ENCODE measurements at regions of chr4 and their contacts with region 1.

Region 1: DNA sequence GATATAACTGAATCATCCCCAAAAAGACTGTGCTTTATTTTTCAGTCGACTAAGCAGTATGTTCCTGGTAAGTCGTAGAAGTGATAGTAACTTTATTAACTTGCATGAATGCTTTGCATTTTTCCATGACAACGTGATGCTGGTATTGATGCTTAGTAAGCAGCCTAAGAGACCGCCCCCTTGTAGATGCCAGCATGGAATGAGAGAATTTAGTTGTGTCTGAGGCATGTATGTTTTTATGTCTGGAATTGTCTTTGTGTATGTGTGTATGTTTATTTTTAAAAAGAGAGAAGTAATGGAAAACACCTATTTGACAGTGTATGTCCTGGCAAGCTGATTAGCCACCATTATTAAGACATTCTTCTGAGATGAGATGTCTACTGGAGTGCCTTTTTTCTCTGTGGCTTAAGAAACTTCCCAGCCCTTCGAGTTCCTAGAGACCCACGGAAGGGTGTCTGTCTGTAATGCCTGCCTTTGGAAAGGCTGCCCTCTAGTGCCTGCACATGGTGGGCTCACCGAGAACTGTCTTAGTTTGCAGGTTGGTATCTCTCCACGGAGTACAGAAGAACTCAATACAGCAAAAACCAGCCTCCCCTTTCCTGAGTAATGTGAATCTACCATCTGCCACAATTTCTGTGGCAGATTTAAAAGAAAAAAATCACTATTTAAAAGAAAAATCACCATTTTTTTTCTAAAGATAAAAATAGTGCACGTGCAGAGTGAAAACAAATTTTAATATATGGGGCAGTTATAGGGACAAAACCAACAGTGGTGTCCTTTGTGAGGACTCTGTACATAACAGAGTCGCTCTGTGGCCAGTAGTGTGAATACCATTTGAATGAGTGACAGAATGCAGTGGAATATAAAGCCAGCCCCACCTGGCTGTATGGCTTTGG is 85.9 kb downstream of the AASDH start:
- DNase-seq: peak; percentile 74
- H3K4me3 ChIP-seq: no peak overlapping the region
- H3K27ac ChIP-seq: no peak overlapping the region
- H3K4me1 ChIP-seq: no peaks in the 10 kb centered on the region
- H3K27me3 ChIP-seq: no peaks in the 10 kb centered on the region
- CTCF ChIP-seq: peak; percentile 73

Region 2: DNA sequence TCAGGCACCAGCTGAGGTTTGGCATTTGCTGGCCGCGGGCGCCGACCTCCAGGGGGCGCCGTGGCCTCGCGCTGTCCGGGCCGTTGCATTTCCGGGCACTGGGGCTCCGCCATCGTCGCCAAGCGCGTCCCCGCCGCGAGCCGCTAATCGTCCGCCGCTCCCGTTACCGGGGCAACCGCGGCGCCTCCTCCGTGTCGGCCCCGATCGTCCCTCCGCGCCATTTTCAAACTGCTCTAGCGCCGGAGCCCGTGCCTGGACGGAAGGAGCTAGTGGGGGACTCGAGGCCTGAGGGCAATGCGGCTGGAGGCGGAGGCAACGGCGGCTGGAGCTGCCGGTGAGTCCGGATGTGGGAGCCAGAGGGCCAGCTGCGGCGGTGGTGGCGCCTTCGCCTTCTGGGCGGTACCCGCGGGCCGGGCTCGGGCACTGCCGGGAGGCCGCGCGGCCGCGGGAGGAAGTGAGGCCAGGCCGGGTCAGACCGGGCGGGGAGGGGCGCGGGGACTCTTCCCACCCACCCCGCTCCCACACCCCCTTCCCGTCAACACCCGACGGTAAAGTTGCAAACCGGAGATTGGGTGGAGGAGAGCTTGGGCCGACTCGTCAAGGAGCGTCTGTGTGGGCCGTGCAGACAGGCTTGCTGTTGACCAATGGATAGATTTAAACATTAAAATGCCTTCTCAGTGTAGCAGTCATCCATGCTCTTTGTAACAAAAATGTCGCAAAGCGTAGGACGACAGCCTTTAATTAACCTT is 352.5 kb before region 1 on chr4 and contains the start of gene CEP135:
- CTCF ChIA-PET with region 1: no interaction called
- POLR2A ChIA-PET with region 1: no interaction called
- intact Hi-C with region 1: loop called (anchors 2 kb)
- DNase-seq: peak; percentile 88
- H3K4me3 ChIP-seq: peak within 1 kb of the TSS; percentile 76
- H3K27ac ChIP-seq: peak within 1 kb of the TSS; percentile 75
- H3K4me1 ChIP-seq: peaks cover 13% of the 10 kb centered on the region
- H3K27me3 ChIP-seq: no peaks in the 10 kb centered on the region
- CTCF ChIP-seq: peak; percentile 71
- total RNA-seq, gene CEP135: 13.8 and 15.3 TPM in 2 replicates

Region 3: DNA sequence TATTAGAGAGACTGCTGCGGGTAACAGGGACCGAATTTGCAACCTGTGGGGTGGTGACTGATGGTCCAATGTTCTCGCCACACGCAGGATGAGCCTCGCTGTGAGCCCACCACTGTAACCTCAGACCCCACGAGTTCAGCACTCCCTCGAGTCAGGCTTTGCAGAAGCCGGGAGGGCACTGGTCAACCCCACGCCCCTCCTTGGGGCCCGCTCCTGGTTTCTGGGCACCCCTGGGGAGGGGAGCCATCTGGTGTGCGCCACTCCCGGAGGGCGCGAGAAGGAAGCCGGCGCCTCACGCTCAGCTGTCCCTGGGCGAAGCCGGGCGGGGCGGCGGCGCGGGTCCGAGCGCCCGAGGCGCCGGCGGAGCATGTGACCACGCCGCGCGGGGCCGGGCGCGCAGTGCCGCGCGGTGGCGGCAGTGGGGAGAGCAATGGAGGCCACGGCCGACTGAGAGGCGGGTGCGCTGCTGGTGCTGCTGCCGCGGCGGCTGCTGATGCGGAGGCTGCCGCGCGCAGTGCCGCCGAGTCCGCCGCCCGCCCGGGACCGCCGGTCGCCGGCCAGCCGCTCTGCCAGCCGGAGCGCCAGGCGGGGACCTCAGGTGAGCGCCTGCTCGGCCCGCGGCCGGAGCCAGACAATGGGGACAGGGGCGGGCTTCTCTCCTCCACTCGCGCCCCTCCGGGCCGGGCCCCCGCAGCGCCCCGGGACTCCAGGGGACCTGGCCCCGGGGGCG is 252.6 kb before region 1 on chr4:
- CTCF ChIA-PET with region 1: no interaction called
- POLR2A ChIA-PET with region 1: no interaction called
- intact Hi-C with region 1: loop called (anchors 2 kb)
- DNase-seq: peak; percentile 64
- H3K4me3 ChIP-seq: peak overlapping the region; percentile 68
- H3K27ac ChIP-seq: peak overlapping the region; percentile 57
- H3K4me1 ChIP-seq: no peaks in the 10 kb centered on the region
- H3K27me3 ChIP-seq: no peaks in the 10 kb centered on the region
- CTCF ChIP-seq: no peak; the same call in 1 of the 2 replicates